ENCODE measurements at regions of chr19 and their contacts with region 1.

Region 1: DNA sequence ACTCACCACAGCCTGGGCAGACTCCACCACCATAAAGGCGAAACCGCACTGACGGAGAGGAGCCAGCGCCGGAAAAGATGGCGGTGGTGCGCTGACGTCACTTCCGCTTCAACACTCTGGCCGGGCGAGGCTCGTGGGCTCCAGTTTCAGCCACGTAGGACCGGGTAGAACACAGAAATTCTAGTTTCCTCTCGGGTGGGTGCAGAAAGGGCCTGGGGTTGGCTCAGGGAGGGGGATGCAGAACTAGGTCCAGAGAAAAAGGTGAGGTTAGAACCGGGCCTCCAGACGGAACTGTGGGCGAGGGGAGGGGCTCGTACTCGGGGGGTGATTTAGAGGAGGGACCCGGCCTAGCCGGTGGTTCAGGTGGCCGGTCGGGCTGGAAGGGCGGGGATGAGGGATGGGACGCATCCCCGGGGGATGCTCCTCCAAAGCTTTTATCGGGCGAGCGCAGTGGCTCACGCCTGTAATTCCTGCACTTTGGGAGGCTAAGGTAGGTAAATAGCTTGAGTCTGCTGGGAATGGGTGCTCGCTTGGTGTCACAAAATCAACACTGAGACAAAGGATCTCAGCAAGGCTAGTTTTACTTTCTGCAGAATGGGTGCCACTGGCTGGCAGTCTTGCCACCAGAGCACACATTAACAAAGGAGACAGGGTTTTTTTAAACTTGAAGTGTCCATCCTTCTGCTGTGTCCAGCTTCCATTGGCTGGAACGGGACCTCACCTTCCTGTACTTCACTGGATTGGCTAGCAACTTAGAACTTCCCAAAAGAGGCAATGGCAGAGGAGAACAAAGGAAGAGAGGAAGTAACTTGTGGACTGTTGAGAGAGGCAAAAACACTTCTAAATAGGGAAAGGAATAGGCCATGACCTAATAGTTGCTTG is at the start of gene ZNF561:
- DNase-seq: peak; percentile 81 to 96 (median 85)
- ATAC-seq: peak; percentile 90
- H3K4me3 ChIP-seq: peak within 1 kb of the TSS; percentile 77
- H3K4me3 Mint-ChIP-seq: peak within 1 kb of the TSS; percentile 97
- H3K27ac ChIP-seq: peak within 1 kb of the TSS; percentile 93 to 94
- H3K27ac Mint-ChIP-seq: peak within 1 kb of the TSS; percentile 99
- H3K4me1 ChIP-seq: peaks cover 20% of the 10 kb centered on the region
- H3K4me1 Mint-ChIP-seq: peaks cover 25% of the 10 kb centered on the region
- H3K27me3 ChIP-seq: no peaks in the 10 kb centered on the region
- H3K27me3 Mint-ChIP-seq: peaks cover 4% of the 10 kb centered on the region
- CTCF ChIP-seq: no peak
- total RNA-seq, gene ZNF561: 45.1 to 46.2 TPM

Region 2: GRCh38 chr19:9205501-9206113 is 415.8 kb before region 1 on chr19:
- CTCF ChIA-PET with region 1: no interaction called
- POLR2A ChIA-PET with region 1: no interaction called
- intact Hi-C with region 1: loop called in 1 of 2 experiments (anchors 2 kb)
- DNase-seq: peak; percentile 40 to 78 (median 58)
- ATAC-seq: peak; percentile 58
- H3K4me3 ChIP-seq: peak overlapping the region; percentile 20
- H3K4me3 Mint-ChIP-seq: peak overlapping the region; percentile 56
- H3K27ac ChIP-seq: no peak overlapping the region
- H3K27ac Mint-ChIP-seq: no peak overlapping the region
- H3K4me1 ChIP-seq: peaks cover 3% of the 10 kb centered on the region
- H3K4me1 Mint-ChIP-seq: no peaks in the 10 kb centered on the region
- H3K27me3 ChIP-seq: no peaks in the 10 kb centered on the region
- H3K27me3 Mint-ChIP-seq: peaks cover 8% of the 10 kb centered on the region
- CTCF ChIP-seq: peak; percentile 96

Region 3: GRCh38 chr19:9584073-9584833 is 37.1 kb before region 1 on chr19 and contains the start of gene ZNF121:
- CTCF ChIA-PET with region 1: interaction called, 3 read pairs
- POLR2A ChIA-PET with region 1: no interaction called
- intact Hi-C with region 1: loop called (anchors 1 to 2 kb)
- DNase-seq: peak; percentile 53 to 88 (median 68)
- ATAC-seq: peak; percentile 70
- H3K4me3 ChIP-seq: peak within 1 kb of the TSS; percentile 82
- H3K4me3 Mint-ChIP-seq: peak within 1 kb of the TSS; percentile 98
- H3K27ac ChIP-seq: peak within 1 kb of the TSS; percentile 92 to 93
- H3K27ac Mint-ChIP-seq: peak within 1 kb of the TSS; percentile 98
- H3K4me1 ChIP-seq: peaks cover 23% of the 10 kb centered on the region
- H3K4me1 Mint-ChIP-seq: peaks cover 36% of the 10 kb centered on the region
- H3K27me3 ChIP-seq: no peaks in the 10 kb centered on the region
- H3K27me3 Mint-ChIP-seq: peaks cover 5% of the 10 kb centered on the region
- CTCF ChIP-seq: no peak
- total RNA-seq, gene ZNF121: 42.0 to 42.1 TPM

Region 4: DNA sequence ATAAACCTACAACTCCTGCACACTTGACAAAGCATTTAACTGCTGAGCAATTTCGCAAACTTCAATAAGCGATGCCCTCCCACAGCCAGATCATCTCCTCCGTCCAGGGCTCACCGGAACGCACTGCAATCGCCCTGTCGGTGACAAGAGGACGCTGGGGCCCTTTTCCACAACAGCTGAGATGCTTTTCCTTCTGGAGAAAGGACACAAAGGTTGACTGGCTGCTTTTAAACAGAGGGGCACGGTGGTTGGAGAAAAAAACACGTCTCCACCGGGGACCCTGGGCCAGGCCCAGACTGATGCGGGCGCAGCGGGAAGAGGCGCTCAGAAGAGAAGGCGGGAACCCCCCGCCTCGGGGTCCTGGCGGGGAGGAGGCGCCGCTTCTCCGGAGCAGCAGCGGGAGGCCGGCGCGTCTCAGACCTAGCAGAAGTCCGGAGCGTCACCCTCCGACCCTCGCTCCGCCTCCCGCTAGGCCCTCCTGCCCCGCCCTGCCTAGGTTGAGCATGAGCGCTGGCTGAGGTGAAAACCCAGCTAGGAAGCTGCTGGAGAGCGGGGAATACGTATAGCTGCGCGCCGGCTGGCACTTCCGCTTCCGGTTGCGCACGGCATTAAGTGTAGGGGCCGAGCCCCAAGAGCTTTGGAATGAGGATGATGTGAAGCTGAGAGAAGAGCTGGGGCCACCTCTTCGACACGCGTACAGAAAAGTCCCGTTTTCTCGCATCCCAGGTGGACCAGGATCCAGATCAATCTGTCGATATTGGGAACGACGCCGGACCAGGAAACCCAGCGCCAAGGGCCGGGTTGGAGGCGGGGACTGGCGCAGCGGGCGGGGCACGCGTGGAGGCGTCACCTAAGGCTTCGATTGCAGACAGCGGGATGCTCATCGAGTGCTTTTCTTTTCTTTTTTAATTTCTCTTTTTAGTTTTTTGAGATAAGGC is 147.0 kb after region 1 on chr19 and contains the start of gene ZNF846:
- CTCF ChIA-PET with region 1: interaction called, 3 read pairs
- POLR2A ChIA-PET with region 1: interaction called, 20 read pairs
- intact Hi-C with region 1: loop called (anchors 1 kb)
- DNase-seq: peak; percentile 88 to 96 (median 90)
- ATAC-seq: peak; percentile 96
- H3K4me3 ChIP-seq: peak within 1 kb of the TSS; percentile 69
- H3K4me3 Mint-ChIP-seq: peak within 1 kb of the TSS; percentile 94
- H3K27ac ChIP-seq: peak within 1 kb of the TSS; percentile 93 to 94
- H3K27ac Mint-ChIP-seq: peak within 1 kb of the TSS; percentile 97
- H3K4me1 ChIP-seq: peaks cover 23% of the 10 kb centered on the region
- H3K4me1 Mint-ChIP-seq: peaks cover 12% of the 10 kb centered on the region
- H3K27me3 ChIP-seq: no peaks in the 10 kb centered on the region
- H3K27me3 Mint-ChIP-seq: no peaks in the 10 kb centered on the region
- CTCF ChIP-seq: no peak
- total RNA-seq, gene ZNF846: 7.9 to 8.5 TPM

Region 5: GRCh38 chr19:9785367-9786331 is 164.3 kb after region 1 on chr19:
- CTCF ChIA-PET with region 1: no interaction called
- POLR2A ChIA-PET with region 1: no interaction called
- intact Hi-C with region 1: loop called in 1 of 2 experiments (anchors 1 kb)
- DNase-seq: peak; percentile 92 to 99 (median 98)
- ATAC-seq: peak; percentile 84
- H3K4me3 ChIP-seq: peak overlapping the region; percentile 69
- H3K4me3 Mint-ChIP-seq: peak overlapping the region; percentile 94
- H3K27ac ChIP-seq: peak overlapping the region; percentile 87 to 92
- H3K27ac Mint-ChIP-seq: peak overlapping the region; percentile 91
- H3K4me1 ChIP-seq: peaks cover 19% of the 10 kb centered on the region
- H3K4me1 Mint-ChIP-seq: peaks cover 31% of the 10 kb centered on the region
- H3K27me3 ChIP-seq: no peaks in the 10 kb centered on the region
- H3K27me3 Mint-ChIP-seq: no peaks in the 10 kb centered on the region
- CTCF ChIP-seq: no peak